SK-N-SH (cell line): ENCODE measurements at regions of chr2 and their contacts with region 1.

Region 1: DNA sequence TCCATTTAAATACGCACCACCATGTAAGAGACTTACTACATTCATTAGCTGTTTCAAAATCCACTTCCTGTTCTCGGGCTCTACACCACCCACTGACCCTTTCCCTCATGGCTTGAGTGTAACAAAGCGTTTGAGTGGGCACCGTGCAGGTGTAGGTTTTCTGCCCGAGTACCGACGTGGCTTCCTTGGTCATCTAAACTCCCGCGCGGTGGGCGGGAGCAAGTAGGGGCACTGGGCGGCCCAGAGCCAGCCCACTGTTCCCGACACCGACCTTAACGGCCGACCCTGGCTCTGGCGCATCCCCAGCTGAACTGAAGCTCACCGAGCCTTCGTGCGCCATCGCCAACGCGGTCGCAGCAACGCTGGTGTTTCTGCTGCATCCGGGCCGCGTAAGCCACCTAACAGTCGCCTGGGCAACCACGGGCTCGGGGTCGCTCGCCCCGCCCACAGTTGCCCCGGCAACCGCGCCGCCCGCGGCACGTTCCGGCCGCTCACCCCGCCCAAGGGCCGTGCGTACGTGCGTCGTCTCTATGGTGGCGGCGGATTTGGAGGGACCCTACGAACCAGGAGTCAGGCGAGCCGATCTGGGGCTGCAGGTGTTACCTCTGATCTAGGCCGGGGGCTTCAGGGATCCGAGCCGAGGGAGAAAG is at the starts of genes C2orf81 and WDR54:
- DNase-seq: peak; percentile 98
- H3K4me3 ChIP-seq: peak within 1 kb of the TSS; percentile 87
- H3K27ac ChIP-seq: peak within 1 kb of the TSS; percentile 82 to 94
- H3K4me1 ChIP-seq: peaks cover 0 to 16% of the 10 kb centered on the region in 2 experiments; a peak in 1 of 4 replicates
- H3K27me3 ChIP-seq: no peaks in the 10 kb centered on the region
- CTCF ChIP-seq: no peak
- EP300 ChIP-seq: no peak; a peak in 1 of 4 replicates
- RAD21 ChIP-seq: no peak
- polyA plus RNA-seq, gene C2orf81: 1.2 and 2.5 TPM in 2 replicates
- polyA plus RNA-seq, gene WDR54: 50.7 and 61.6 TPM in 2 replicates

Region 2: DNA sequence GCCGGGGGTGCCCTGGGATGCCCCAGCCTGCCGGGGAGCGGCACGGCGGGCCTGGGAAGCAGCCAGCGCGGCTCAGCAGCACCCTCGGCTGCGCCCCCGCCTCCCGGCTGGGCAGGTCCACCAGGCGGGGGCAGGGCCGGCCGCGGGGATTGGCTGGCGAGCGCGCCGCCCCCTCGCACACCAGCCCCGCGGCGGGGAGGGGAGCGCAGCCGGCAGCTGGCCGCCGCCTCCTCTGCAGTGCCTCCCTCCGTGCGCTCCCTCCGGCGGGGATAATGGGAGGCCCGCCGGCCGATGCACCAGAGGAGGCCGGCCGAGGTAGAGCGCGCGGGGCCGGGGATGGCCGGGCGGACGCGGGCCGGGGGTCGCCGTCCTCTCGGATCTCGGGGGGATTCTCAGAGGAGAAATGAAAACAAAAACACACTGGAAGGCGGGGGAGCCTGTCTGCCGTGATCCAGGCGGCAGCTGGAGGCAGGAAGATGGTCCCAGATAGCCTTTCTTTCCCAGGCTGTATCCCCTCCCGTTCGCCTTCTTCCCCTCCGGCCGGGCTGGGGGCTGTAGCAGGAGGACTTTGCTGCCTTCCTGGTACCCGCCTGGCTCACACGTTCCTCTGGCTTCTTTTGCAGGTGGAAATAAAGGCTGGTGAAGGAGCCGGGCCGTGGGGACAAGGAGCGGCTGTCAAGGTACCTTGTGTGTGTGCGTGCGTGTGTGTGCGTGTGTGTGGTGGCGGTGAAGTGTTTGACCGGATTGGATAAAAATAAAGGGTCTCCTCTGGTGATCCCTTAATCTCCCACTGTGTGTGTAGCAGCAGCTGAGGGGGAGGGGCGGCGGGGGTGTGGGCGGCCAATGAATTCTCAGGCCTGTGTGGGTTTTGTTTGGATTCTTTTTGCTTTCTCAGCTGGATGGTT is 418.6 kb before region 1 on chr2:
- CTCF ChIA-PET with region 1: no interaction called
- POLR2A ChIA-PET with region 1: no interaction called
- DNase-seq: peak; percentile 98
- H3K4me3 ChIP-seq: peak overlapping the region; percentile 62 to 84
- H3K27ac ChIP-seq: peak overlapping the region; percentile 49 to 61; a peak in 2 of 4 replicates
- H3K4me1 ChIP-seq: peaks cover 27 to 47% of the 10 kb centered on the region in 2 experiments; a peak in 3 of 4 replicates
- H3K27me3 ChIP-seq: no peaks in the 10 kb centered on the region
- CTCF ChIP-seq: no peak
- EP300 ChIP-seq: no peak
- RAD21 ChIP-seq: no peak; the same call in 1 of the 2 replicates

Region 3: DNA sequence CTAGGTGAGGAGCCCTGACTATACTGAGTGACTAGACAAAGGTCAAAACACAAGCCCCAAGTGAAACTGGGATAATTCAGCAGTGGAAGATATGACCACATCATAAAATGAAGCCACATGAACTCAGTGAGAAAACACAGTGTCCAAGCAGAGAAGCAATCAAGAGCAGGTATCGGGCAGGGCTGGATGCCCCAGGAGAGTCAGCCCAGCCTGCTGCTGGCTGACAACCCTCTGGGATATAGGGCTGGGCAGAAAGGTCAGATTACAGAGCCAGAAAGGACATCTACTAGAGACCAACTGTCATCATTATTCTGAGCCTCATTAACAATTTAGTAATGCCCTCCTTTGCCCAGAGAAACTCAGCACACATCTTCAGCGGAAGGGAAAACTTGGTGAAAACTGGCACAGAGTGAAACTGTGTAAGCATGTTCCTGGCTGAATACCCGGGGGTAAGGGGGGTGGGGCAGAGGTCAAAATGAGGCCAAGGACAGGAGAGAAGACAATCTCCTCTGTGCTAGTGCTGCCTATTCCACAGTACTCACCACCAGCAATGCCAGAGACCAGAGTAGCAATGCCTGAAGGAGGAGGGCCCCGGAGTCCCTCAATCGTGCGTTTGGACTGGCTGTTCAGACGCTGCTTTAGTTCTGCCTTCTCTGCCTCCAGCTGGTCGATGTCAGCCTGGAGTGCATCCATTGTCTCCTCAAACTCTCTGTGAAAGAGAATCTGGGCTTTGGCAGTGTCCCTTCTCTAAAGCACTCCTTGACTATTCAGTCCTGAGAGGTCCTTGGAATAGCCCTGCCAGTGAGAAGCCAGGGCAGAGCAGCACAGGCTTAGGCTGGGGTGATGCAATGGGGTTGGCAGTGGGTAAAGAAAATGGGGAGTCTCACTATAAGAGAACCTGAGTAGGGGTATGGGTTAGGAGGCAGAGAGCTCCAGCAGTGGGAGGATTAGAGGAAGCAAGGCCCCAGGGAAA is 56.5 kb before region 1 on chr2:
- CTCF ChIA-PET with region 1: no interaction called
- POLR2A ChIA-PET with region 1: no interaction called
- DNase-seq: no peak
- H3K4me3 ChIP-seq: no peak overlapping the region
- H3K27ac ChIP-seq: no peak overlapping the region
- H3K4me1 ChIP-seq: no peaks in the 10 kb centered on the region
- H3K27me3 ChIP-seq: no peaks in the 10 kb centered on the region
- CTCF ChIP-seq: no peak
- EP300 ChIP-seq: no peak
- RAD21 ChIP-seq: no peak

Region 4: GRCh38 chr2:74440378-74441169 is 19.2 kb after region 1 on chr2:
- CTCF ChIA-PET with region 1: interaction called, 3 read pairs
- POLR2A ChIA-PET with region 1: interaction called, 25 read pairs
- DNase-seq: peak; percentile 99
- H3K4me3 ChIP-seq: peak overlapping the region; percentile 73 to 75
- H3K27ac ChIP-seq: peak overlapping the region; percentile 64 to 98
- H3K4me1 ChIP-seq: peaks cover 20 to 27% of the 10 kb centered on the region in 2 experiments; a peak in 3 of 4 replicates
- H3K27me3 ChIP-seq: no peaks in the 10 kb centered on the region
- CTCF ChIP-seq: no peak
- EP300 ChIP-seq: no peak
- RAD21 ChIP-seq: no peak